Activated CD4-positive, alpha-beta T cell treated with anti-CD3 and anti-CD28 coated beads, Interleukin-2, amount 10 ng/mL, durations not matched to agents 7 days and 5 days (primary cell): ENCODE measurements at regions of chr10 and their contacts with region 1.

Region 1: DNA sequence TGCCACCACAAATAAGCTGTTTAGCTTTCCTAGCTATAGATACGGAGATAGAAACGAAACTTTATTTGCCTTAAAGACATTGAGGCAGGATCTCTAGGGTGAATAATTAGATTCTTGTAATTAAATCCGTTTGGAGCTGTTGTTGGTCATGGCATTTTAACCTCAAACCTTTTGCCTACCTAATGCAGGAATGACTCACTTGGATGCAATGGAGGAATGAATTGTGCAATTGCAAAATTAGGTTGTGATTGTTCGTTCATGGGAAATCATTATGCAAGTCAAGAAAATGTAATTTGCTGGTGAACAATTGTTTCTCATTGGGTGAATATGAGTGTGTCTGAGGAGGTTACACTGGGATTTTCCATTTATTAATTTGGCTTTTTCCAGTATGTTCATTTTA is 703.5 kb downstream of the GATA3 start:
- DNase-seq: no peak
- H3K4me3 Mint-ChIP-seq: no peak overlapping the region
- H3K27ac Mint-ChIP-seq: no peak overlapping the region
- H3K4me1 Mint-ChIP-seq: peaks cover 2% of the 10 kb centered on the region
- H3K27me3 Mint-ChIP-seq: no peaks in the 10 kb centered on the region

Region 2: DNA sequence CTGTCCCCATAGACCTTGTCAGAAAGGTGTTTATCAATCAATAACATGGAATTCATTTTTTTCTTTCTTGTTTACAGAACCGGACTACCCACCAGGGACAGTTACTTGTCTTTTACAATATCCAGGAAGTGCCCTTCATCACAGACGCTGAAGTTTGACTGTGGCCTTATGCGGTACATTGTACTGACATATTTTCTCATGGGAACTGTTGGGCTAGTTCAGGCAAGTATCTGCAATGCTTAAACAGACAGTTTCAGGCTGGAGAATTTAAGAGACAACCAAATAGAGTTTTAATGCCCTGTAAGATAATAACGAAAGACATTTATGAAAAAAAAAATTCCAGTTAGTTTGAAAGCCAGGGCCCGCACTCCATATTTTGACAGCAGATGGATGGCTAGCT is 457.1 kb before region 1 on chr10:
- CTCF ChIA-PET with region 1: interaction called, 10 read pairs
- POLR2A ChIA-PET with region 1: no interaction called
- DNase-seq: no peak
- H3K4me3 Mint-ChIP-seq: no peak overlapping the region
- H3K27ac Mint-ChIP-seq: no peak overlapping the region
- H3K4me1 Mint-ChIP-seq: no peaks in the 10 kb centered on the region
- H3K27me3 Mint-ChIP-seq: peaks cover 23% of the 10 kb centered on the region